ENCODE measurements at regions of chr22 and their contacts with region 1.

Region 1: DNA sequence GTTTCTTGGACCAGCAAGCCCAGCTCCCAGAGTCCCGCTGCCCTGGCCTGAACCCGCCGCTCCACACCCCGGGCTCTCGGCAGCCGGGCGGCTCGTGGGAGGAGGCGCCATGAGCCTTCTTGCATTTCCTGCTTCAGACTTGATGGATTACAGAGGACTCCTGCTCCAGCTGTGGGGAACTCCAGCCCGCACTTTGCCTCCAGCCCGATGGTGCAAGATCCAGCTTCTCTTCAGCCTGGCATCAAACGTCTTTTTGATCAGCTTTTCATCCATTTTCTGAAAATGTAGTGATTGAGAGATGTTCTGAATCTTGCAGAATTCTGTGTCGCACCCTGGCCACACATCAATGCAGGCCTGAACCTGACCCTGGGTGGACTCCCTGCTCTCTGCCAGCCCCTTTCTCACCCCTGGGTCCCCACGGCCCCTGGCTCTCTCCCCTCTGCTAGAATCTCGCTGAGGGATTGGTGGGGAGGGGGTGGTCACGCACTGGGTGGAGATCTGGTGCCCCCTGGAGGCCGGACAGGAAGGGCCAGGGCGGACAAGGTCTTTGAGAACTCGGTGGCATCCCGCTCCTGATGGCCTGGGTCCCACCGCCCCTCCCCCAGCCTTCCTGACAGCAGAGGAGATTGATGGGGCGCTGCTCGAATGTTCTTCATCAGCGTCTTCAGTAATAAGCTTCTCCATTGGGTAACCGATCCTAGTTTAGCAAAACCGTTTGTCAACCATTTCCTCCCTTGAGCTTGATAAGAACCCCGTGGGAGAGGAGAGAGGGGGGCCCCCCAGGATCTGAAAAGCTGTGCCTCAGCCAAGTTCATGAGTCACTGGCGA is 12.1 kb upstream of the NFAM1 start:
- DNase-seq: peak; percentile 90
- H3K4me3 Mint-ChIP-seq: peak overlapping the region; percentile 68
- H3K27ac Mint-ChIP-seq: peak overlapping the region; percentile 86
- H3K4me1 Mint-ChIP-seq: peaks cover 32% of the 10 kb centered on the region
- H3K27me3 Mint-ChIP-seq: no peaks in the 10 kb centered on the region

Region 2: GRCh38 chr22:41966607-41967240 is 477.6 kb before region 1 on chr22:
- CTCF ChIA-PET with region 1: interaction called, 33 read pairs
- POLR2A ChIA-PET with region 1: no interaction called
- intact Hi-C with region 1: no loop called
- DNase-seq: peak; percentile 63
- H3K4me3 Mint-ChIP-seq: no peak overlapping the region
- H3K27ac Mint-ChIP-seq: peak overlapping the region; percentile 2
- H3K4me1 Mint-ChIP-seq: peaks cover 7% of the 10 kb centered on the region
- H3K27me3 Mint-ChIP-seq: peaks cover 3% of the 10 kb centered on the region

Region 3: DNA sequence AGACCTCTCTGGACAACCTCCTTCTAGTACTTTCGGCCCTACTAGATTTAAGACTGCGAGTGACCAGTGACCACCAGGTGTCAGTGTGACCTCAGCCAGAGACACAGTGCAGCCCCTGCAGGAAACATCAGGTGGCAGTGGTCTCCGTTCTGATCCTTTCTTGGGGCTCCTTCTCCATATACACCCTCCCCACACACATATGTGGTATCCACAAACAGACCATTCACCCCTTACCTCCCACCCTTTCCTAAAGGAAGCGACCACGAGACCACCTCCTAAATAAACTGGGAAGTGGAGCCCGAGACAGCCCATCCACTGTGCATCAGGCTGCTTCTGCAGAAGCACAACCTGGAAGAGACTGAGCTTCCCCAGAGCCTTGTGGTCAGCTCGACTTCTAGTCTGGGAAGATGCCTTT is 275.2 kb before region 1 on chr22:
- CTCF ChIA-PET with region 1: interaction called, 17 read pairs
- POLR2A ChIA-PET with region 1: no interaction called
- intact Hi-C with region 1: no loop called
- DNase-seq: peak; percentile 83
- H3K4me3 Mint-ChIP-seq: no peak overlapping the region
- H3K27ac Mint-ChIP-seq: no peak overlapping the region
- H3K4me1 Mint-ChIP-seq: peaks cover 27% of the 10 kb centered on the region
- H3K27me3 Mint-ChIP-seq: no peaks in the 10 kb centered on the region

Region 4: DNA sequence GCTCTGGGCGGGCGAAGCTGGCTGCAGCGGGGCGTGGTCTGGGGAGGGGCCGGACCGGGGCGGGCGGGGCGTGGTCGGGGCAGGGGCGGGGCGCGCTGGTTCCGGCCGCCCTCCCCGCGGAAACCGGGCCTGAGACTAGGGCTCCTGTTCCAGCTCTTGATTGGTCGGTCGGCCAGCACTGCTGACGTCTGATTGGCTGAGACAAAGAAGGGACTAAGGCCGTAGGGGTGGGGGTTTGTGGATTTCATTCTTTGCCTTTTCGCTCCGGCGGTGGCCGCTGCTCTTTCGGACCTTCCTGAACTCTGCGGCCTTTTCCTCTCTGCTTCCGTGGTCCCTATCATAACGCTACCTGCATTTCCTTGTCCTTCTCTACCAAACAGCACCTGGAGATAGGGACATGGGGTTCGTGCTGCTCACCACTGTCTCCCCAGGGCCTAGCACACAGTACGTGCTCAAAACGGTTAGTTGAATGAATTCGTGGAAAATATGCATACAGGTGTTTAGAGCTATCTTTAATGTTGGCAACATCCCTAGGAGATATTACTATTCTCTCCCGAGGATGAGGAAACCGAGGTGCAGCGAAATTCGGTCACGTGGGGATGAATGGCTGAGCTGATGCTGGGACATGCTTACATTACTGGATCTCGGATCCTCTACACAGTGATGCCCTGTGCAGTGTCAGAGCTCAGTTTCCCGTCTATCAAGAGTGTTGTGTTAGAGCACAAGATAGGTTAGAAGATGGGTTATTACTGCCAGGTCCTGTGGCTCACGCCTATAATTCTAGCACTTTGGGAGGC is 74.8 kb before region 1 on chr22:
- CTCF ChIA-PET with region 1: interaction called, 12 read pairs
- POLR2A ChIA-PET with region 1: no interaction called
- intact Hi-C with region 1: no loop called
- DNase-seq: peak; percentile 92
- H3K4me3 Mint-ChIP-seq: peak overlapping the region; percentile 82
- H3K27ac Mint-ChIP-seq: peak overlapping the region; percentile 39
- H3K4me1 Mint-ChIP-seq: peaks cover 13% of the 10 kb centered on the region
- H3K27me3 Mint-ChIP-seq: peaks cover 22% of the 10 kb centered on the region